HepG2 (cell line): ENCODE measurements at regions of chr19 and their contacts with region 1.

Region 1: DNA sequence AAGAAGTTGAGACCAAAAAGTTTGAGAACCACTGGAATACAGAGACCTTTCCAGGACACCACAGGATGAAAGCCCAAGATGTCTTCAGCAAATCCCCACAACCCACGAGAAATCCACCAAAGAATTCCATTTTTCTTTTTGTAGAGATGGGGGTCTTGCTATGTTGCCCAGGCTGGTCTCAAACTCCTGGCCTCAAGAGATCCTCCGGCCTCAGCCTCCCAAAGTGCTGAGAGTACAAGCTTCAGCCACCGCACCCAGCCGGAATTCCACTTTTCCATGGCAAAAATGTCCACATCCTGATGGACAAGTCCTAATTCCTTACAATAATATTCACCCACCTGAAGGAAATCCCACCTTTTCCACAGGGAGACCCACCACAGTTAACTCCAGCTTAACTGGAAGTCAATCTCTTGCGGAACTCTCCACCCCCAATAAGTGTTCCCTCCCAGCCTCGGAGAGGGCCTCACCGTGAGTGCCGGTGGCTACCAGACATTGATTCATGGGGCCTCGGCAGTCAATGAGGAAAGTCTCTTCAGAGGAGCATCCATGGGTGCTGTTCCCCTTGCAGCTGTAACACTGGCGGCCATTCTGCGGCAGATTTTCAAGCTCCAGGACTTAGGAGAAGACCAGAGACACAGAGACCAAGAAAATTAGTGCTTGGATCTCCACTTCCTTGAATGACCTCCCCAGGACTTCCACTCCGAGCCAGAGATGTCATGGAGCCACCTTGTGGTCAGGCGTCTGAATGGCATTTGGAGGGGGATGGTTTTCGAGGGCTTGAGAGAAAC is 12.3 kb upstream of the CADM4 start:
- DNase-seq: peak; percentile 75
- ATAC-seq: peak; percentile 93
- H3K4me3 ChIP-seq: peak overlapping the region; percentile 59 to 75 (median 69)
- H3K27ac ChIP-seq: peak overlapping the region; percentile 62
- H3K4me1 ChIP-seq: peaks cover 8% of the 10 kb centered on the region
- H3K27me3 ChIP-seq: no peaks in the 10 kb centered on the region
- CTCF ChIP-seq: peak; percentile 93
- EP300 ChIP-seq: no peak
- POLR2A ChIP-seq: no peak
- RAD21 ChIP-seq: peak; percentile 80

Region 2: GRCh38 chr19:43534816-43535761 is 116.9 kb before region 1 on chr19:
- CTCF ChIA-PET with region 1: interaction called, 5 read pairs
- POLR2A ChIA-PET with region 1: no interaction called
- in situ Hi-C with region 1: no loop called
- intact Hi-C with region 1: loop called (anchors 1 kb)
- DNase-seq: peak; percentile 35
- ATAC-seq: peak; percentile 72
- H3K4me3 ChIP-seq: no peak overlapping the region
- H3K27ac ChIP-seq: no peak overlapping the region
- H3K4me1 ChIP-seq: peaks cover 6% of the 10 kb centered on the region; the same call in 1 of the 2 replicates
- H3K27me3 ChIP-seq: no peaks in the 10 kb centered on the region
- CTCF ChIP-seq: peak; percentile 65
- EP300 ChIP-seq: no peak
- POLR2A ChIP-seq: no peak
- RAD21 ChIP-seq: 0 out of 2 replicates have a peak, but pooled peaks have one; percentile 18

Region 3: DNA sequence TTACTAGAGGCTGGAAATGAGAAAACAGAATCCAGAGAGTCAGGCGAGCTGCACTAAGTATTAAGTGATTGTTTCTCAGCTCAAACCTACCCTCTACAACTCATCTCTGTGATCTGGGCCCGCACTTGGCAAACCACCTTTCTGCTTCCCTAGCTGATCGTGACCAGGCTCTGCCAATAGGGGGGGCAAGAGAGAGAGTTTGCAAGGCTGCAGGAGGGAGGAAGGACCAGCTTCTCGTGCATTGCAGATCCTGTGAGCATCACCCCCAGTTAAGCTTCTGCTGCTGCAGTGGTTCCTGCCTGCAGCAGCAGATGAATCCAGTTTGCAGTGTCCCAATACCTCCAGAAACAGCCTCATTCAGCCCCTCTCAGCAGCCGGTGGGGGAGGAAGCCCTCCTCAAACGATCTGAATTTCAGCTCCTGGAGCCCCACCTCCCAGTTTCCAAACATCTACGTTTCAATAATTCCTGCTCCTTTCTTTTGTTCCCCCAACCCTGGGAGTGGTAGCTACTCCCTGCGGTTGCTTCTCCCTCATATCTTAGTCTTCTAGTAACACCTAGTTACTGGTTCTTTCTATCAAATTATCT is 96.7 kb before region 1 on chr19:
- CTCF ChIA-PET with region 1: interaction called, 14 read pairs
- POLR2A ChIA-PET with region 1: interaction called, 3 read pairs
- in situ Hi-C with region 1: loop called (anchors 5 kb)
- intact Hi-C with region 1: loop called (anchors 1 kb)
- DNase-seq: peak; percentile 62
- ATAC-seq: peak; percentile 88
- H3K4me3 ChIP-seq: no peak overlapping the region
- H3K27ac ChIP-seq: no peak overlapping the region
- H3K4me1 ChIP-seq: no peaks in the 10 kb centered on the region
- H3K27me3 ChIP-seq: no peaks in the 10 kb centered on the region
- CTCF ChIP-seq: peak; percentile 84
- EP300 ChIP-seq: no peak
- POLR2A ChIP-seq: no peak
- RAD21 ChIP-seq: 0 out of 2 replicates have a peak, but pooled peaks have one; percentile 36

Region 4: GRCh38 chr19:43711751-43712355 is 59.9 kb after region 1 on chr19:
- CTCF ChIA-PET with region 1: no interaction called
- POLR2A ChIA-PET with region 1: no interaction called
- in situ Hi-C with region 1: no loop called
- intact Hi-C with region 1: no loop called
- DNase-seq: no peak
- ATAC-seq: no peak
- H3K4me3 ChIP-seq: no peak overlapping the region
- H3K27ac ChIP-seq: no peak overlapping the region
- H3K4me1 ChIP-seq: peaks cover 20% of the 10 kb centered on the region
- H3K27me3 ChIP-seq: no peaks in the 10 kb centered on the region
- CTCF ChIP-seq: no peak
- EP300 ChIP-seq: no peak
- POLR2A ChIP-seq: no peak
- RAD21 ChIP-seq: no peak